ENCODE measurements at regions of chr3 and their contacts with region 1.

Region 1: GRCh38 chr3:177478170-177478860 is 281.0 kb upstream of the TBL1XR1 start:
- DNase-seq: peak; percentile 99
- H3K4me3 ChIP-seq: no peak overlapping the region
- H3K27ac ChIP-seq: peak overlapping the region; percentile 91
- H3K4me1 ChIP-seq: peaks cover 10% of the 10 kb centered on the region
- H3K27me3 ChIP-seq: no peaks in the 10 kb centered on the region
- CTCF ChIP-seq: no peak

Region 2: DNA sequence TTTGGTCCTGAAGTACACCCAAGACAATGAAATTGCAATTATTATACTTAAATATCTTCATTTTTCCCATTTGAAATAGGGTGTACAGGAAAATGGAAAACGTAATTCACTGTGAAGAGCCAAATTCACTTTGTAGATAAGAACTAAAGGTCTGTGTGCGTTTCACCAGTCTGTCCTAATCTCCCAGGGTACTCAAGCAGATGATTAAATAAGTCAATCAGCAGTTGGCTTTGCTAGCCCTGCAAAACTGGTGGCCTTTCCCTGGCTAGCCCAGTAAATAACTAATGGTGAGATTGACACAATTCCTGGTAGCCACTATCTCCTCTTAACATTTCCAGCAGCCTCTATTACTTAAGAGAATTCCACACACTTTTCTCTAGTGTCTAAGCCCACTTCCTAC is 670.4 kb before region 1 on chr3:
- CTCF ChIA-PET with region 1: no interaction called
- dilution Hi-C with region 1: no loop called
- in situ Hi-C with region 1: no loop called
- intact Hi-C with region 1: no loop called
- DNase-seq: no peak
- H3K4me3 ChIP-seq: no peak overlapping the region
- H3K27ac ChIP-seq: no peak overlapping the region
- H3K4me1 ChIP-seq: no peaks in the 10 kb centered on the region
- H3K27me3 ChIP-seq: no peaks in the 10 kb centered on the region
- CTCF ChIP-seq: no peak

Region 3: GRCh38 chr3:177236704-177237103 is 241.6 kb before region 1 on chr3:
- CTCF ChIA-PET with region 1: no interaction called
- dilution Hi-C with region 1: no loop called
- in situ Hi-C with region 1: no loop called
- intact Hi-C with region 1: no loop called
- DNase-seq: peak; percentile 29
- H3K4me3 ChIP-seq: no peak overlapping the region
- H3K27ac ChIP-seq: no peak overlapping the region
- H3K4me1 ChIP-seq: no peaks in the 10 kb centered on the region
- H3K27me3 ChIP-seq: no peaks in the 10 kb centered on the region
- CTCF ChIP-seq: no peak

Region 4: DNA sequence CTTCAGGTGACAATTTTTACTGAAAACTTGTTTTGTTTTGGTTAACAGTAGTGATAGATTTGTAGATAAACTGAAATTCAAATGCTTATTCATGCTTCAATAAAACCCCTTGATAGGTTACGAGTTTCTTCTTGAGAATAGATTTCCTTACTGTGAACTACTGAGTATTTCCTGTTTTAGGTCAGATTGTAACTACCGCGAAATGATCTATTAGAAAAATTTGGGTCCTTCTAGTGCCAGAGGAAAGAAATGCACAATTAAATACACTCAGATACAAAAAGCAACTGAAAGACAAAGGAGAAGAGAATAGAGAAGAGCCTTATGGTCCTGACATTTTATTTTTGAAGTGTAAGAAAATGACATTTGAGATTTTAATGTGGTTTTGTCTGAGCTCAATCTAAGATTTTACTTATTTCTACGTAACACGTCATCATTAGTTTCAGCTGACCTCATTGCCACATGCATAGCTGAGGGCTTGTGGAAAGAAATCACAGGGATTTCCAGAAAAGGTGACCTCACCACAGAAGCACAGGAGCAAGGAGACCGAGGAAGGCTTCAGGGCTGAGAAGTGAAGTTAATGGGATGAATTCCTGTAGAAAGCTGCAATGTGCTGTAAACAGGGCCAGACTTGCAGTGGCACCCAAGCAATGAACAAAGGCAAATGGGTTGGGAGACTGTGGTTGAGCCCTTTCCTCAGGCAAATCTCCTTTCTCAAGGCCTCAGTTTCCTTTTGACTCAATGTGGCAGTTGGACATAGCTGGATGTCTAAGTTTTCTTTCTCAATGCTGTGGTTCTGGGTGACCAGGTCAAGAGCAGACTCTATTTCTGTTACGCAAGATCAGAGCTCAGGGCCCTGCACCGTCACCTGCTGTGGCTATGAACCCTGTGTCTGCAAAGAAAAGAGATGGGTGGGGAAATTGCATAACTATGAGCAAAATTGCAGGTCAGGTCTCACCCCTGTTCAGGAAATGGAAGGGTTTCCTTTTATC is 29.0 kb before region 1 on chr3:
- CTCF ChIA-PET with region 1: no interaction called
- dilution Hi-C with region 1: no loop called
- in situ Hi-C with region 1: no loop called
- intact Hi-C with region 1: loop called (anchors 1 kb)
- DNase-seq: peak; percentile 100
- H3K4me3 ChIP-seq: no peak overlapping the region
- H3K27ac ChIP-seq: peak overlapping the region; percentile 99
- H3K4me1 ChIP-seq: peaks cover 51% of the 10 kb centered on the region
- H3K27me3 ChIP-seq: no peaks in the 10 kb centered on the region
- CTCF ChIP-seq: no peak

Region 5: DNA sequence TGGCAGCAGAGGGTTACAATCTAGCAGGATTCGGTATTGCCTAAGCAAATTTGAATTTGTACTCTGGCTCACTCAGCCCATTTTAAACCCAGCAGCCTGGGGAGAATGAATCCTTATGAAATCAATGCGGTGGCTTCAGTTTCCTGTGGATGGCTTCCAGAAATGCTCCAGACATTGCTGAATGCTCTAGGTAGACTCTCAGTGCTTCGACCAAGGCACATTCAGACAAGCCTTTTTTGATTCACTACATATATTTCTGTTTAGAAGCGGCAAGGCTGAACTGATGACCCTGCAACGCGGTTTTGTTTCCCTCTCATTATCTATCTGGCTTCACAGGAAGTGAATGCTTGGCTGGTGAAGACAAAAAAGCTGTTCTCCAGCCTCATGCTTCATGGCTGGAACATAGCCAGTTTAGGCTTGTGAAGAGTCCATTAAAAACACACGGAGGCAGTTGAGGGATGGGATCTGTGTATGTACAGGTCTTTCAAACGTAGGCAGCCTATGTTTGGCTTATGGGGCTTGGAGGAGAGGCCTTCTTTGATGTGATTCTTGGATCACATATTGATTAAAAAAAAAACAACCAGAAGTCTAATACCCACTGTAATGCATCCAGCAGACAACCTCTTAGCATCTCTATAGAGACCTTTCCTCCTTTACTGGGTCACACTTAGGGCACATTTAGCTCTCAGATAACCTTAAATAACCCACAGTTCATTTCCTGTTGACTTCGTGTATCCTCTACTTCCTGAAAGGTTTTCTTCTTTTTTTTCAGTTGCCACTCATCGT is 119.2 kb after region 1 on chr3:
- CTCF ChIA-PET with region 1: no interaction called
- dilution Hi-C with region 1: no loop called
- in situ Hi-C with region 1: no loop called
- intact Hi-C with region 1: loop called (anchors 1 kb)
- DNase-seq: peak; percentile 91
- H3K4me3 ChIP-seq: no peak overlapping the region
- H3K27ac ChIP-seq: peak overlapping the region; percentile 89
- H3K4me1 ChIP-seq: peaks cover 77% of the 10 kb centered on the region
- H3K27me3 ChIP-seq: no peaks in the 10 kb centered on the region
- CTCF ChIP-seq: no peak

Region 6: DNA sequence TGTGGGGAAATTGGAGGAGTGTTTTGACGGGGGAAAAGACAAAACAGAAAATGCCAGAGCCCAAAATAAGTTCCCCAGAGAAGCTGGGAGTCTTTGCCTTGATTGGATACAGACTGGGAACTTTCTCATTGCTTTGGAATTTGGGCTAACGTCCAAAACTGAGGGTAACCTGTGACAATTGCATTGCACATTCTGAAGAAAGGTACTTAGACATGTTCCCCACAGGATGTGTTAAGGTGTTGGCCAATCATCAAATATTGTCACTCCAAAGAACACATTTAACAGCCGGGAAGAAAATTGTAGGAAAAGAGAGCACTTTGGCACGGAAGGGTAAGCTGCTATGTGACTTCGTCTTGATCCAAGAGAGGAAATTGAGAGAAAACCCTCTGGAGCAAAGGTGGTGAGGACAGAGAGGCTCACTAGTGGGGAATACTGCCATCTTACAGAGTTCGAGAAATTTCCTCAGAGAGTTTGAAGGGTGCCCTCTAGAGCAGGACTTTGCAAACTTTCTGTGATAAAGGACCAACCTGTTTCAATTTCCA is 338.4 kb after region 1 on chr3:
- CTCF ChIA-PET with region 1: no interaction called
- dilution Hi-C with region 1: loop called (anchors 10 kb)
- in situ Hi-C with region 1: no loop called
- intact Hi-C with region 1: no loop called
- DNase-seq: peak; percentile 92
- H3K4me3 ChIP-seq: no peak overlapping the region
- H3K27ac ChIP-seq: peak overlapping the region; percentile 55
- H3K4me1 ChIP-seq: peaks cover 24% of the 10 kb centered on the region
- H3K27me3 ChIP-seq: no peaks in the 10 kb centered on the region
- CTCF ChIP-seq: peak in 1 of 2 donors; percentile 39